IMR-90 (cell line): ENCODE measurements at regions of chr10 and their contacts with region 1.

Region 1: DNA sequence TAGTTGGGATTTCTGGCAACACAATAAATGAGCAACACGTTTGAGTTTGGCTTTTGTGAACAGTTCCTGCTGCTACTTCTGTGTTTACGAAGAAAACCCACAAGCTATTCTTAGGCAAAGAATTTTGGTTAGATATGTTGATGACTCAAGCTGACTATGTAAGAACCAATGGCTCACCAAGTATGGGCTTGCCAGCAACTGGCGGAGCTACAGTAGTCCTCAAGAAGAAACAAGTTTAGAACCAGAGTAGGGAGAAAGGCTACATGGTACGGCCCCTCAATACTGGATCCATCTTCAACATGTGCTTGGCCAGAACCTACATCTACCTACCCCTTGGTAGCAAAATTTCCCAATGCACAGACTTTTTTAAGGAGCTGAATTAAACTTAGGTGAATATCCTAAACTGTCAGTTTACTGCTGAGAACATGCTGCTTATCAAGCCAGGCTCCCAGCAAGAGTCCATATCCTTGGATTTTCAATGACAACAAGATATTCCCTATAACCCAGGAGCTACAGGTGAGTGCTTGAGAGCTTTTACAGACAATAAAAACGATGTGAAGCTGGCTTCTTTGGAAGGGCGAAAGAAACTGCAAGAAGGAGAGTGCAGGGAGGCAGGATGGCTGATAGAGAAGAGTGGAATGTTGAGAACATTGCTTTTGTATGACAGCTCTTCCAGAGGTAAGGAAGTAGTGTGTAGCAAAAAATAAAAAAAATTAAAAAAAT is 74.3 kb upstream of the ASAH2 start:
- DNase-seq: peak; percentile 98
- ATAC-seq: peak; percentile 96
- H3K4me3 ChIP-seq: peak overlapping the region; percentile 8; the same call in 1 of the 2 replicates
- H3K27ac ChIP-seq: peak overlapping the region; percentile 33
- H3K4me1 ChIP-seq: peaks cover 7% of the 10 kb centered on the region; the same call in 1 of the 2 replicates
- H3K27me3 ChIP-seq: no peaks in the 10 kb centered on the region
- CTCF ChIP-seq: no peak
- POLR2A ChIP-seq: no peak
- RAD21 ChIP-seq: no peak

Region 2: GRCh38 chr10:49803988-49804387 is 521.6 kb before region 1 on chr10:
- CTCF ChIA-PET with region 1: no interaction called
- POLR2A ChIA-PET with region 1: no interaction called
- dilution Hi-C with region 1: no loop called
- in situ Hi-C with region 1: no loop called
- intact Hi-C with region 1: no loop called
- DNase-seq: no peak
- ATAC-seq: no peak
- H3K4me3 ChIP-seq: no peak overlapping the region
- H3K27ac ChIP-seq: no peak overlapping the region
- H3K4me1 ChIP-seq: no peaks in the 10 kb centered on the region
- H3K27me3 ChIP-seq: no peaks in the 10 kb centered on the region
- CTCF ChIP-seq: no peak
- POLR2A ChIP-seq: no peak
- RAD21 ChIP-seq: no peak

Region 3: GRCh38 chr10:50349554-50349953 is 23.9 kb after region 1 on chr10:
- CTCF ChIA-PET with region 1: no interaction called
- POLR2A ChIA-PET with region 1: no interaction called
- dilution Hi-C with region 1: no loop called
- in situ Hi-C with region 1: no loop called
- intact Hi-C with region 1: no loop called
- DNase-seq: no peak
- ATAC-seq: no peak
- H3K4me3 ChIP-seq: no peak overlapping the region
- H3K27ac ChIP-seq: no peak overlapping the region
- H3K4me1 ChIP-seq: no peaks in the 10 kb centered on the region
- H3K27me3 ChIP-seq: no peaks in the 10 kb centered on the region
- CTCF ChIP-seq: no peak
- POLR2A ChIP-seq: no peak
- RAD21 ChIP-seq: no peak

Region 4: DNA sequence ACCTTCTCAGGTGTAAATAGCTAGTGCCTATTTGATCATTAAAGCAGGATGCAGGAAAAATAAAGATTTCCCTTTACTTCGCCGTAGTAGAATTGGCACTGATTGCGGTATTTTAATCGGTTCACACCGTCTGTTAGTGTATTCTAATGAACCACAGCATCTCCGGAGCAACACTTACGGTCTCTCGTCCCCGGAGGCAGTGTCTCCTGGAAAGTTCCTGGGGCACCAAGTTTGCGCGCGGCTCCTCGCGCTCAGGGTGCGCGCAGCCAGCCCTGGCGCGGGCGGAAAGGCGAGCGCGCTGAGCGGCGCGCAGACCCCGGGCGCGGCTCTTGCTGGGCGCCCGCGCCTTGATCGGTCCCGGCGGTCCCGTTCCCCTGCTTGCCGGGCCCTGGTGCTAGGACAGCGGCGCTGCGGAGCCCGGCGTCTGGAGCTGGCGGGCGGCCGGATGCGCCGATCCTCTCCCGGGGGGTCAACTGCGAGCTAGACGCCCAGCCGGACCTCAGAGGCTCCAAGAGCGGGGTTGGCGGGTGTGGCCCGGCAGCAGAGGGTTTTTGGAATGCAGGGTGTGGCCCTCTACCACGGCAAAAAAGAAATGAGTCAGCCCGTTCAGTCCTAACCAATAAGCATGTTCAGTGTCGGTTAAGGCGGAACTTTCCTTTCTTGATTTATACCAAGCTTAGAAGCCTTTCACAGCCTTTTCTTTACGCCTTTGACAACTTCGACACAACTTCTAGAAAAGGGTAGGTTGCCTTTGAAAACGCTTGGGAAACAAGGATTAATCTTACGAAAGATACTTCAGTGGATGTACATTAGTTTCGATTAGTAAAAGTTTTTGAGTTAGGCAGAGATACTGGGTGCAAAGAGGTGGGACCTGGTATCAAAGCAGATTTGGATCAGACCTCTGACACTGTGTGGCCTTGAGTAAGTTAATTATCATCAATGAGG is 92.5 kb after region 1 on chr10:
- CTCF ChIA-PET with region 1: no interaction called
- POLR2A ChIA-PET with region 1: interaction called, 6 read pairs
- dilution Hi-C with region 1: no loop called
- in situ Hi-C with region 1: no loop called
- intact Hi-C with region 1: loop called (anchors 5 kb)
- DNase-seq: peak; percentile 80
- ATAC-seq: peak; percentile 93
- H3K4me3 ChIP-seq: peak overlapping the region; percentile 47
- H3K27ac ChIP-seq: peak overlapping the region; percentile 24
- H3K4me1 ChIP-seq: peaks cover 10% of the 10 kb centered on the region; the same call in 1 of the 2 replicates
- H3K27me3 ChIP-seq: no peaks in the 10 kb centered on the region
- CTCF ChIP-seq: no peak; the same call in 1 of the 2 replicates
- POLR2A ChIP-seq: 0 out of 2 replicates have a peak, but pooled peaks have one; percentile 46
- RAD21 ChIP-seq: no peak